Stomach (tissue), 19 donors: ENCODE measurements at regions of chr7 and their contacts with region 1.

Region 1: GRCh38 chr7:148884299-148885022 is 370 bp upstream of the EZH2 start:
- DNase-seq: peak; percentile 94 to 98
- H3K4me3 ChIP-seq: peak overlapping the region; percentile 87 to 99 (median 96)
- H3K27ac ChIP-seq: peak overlapping the region; percentile 90 to 97 (median 96)
- H3K4me1 ChIP-seq: peaks cover 5 to 14% (median 9%) of the 10 kb centered on the region in 4 donors
- H3K27me3 ChIP-seq: peaks cover 0 to 4% (median 0%) of the 10 kb centered on the region in 3 donors
- CTCF ChIP-seq: no peak
- EP300 ChIP-seq: no peak
- POLR2A ChIP-seq: peak in 1 of 4 donors; percentile 46

Region 2: DNA sequence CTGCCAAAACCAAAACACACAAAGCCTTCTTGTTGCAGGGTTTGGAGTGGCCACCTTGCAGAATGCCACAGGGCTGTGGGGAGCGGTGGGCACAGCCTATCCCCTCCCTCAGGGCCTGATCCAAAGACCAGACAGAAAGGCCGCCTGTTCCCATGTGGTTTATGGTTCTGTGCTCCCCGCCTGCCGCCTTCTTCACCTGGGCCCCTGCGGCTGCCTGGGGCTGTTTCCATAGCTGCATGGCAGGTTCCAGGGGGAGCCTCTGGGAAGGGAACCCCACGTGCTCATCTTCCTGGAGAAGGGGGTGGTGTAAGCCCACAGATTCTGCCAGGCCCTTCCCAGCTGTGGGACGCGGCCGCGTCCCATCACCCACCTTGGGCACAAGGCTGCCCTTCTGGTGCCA is 70.3 kb after region 1 on chr7:
- intact Hi-C with region 1: loop called (anchors 10 kb)
- DNase-seq: no peak
- H3K4me3 ChIP-seq: no peak overlapping the region
- H3K27ac ChIP-seq: no peak overlapping the region
- H3K4me1 ChIP-seq: no peaks in the 10 kb centered on the region
- H3K27me3 ChIP-seq: no peaks in the 10 kb centered on the region
- CTCF ChIP-seq: no peak
- EP300 ChIP-seq: no peak
- POLR2A ChIP-seq: no peak